ENCODE measurements at regions of chr3 and their contacts with region 1.

Region 1: DNA sequence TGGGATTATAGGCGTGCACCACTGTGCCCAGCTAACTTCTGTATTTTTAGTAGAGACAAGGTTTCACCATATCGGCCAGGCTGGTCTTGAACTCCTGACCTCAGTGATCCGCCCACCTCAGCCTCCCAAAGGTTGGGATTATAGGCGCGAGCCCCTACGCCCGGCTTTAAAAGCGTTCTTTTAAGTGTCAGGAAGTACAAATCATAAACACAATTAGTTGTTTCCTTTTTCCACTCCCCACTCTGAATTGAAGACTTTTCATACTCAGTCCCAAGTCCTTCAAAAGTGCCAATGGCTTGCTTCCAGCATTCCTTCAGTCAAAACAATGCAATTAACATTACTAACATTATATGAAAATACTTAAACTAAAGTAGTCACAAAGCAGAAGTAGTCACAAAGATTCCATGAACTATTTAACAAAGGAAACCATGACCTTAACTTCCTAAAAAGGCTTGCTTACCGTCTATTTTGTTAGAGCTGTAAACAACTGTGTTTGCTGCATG is 8.1 kb downstream of the WDR82 start:
- DNase-seq: no peak
- H3K4me3 Mint-ChIP-seq: peak overlapping the region; percentile 72
- H3K27ac Mint-ChIP-seq: peak overlapping the region; percentile 91
- H3K4me1 Mint-ChIP-seq: peaks cover 87% of the 10 kb centered on the region
- H3K27me3 Mint-ChIP-seq: no peaks in the 10 kb centered on the region

Region 2: DNA sequence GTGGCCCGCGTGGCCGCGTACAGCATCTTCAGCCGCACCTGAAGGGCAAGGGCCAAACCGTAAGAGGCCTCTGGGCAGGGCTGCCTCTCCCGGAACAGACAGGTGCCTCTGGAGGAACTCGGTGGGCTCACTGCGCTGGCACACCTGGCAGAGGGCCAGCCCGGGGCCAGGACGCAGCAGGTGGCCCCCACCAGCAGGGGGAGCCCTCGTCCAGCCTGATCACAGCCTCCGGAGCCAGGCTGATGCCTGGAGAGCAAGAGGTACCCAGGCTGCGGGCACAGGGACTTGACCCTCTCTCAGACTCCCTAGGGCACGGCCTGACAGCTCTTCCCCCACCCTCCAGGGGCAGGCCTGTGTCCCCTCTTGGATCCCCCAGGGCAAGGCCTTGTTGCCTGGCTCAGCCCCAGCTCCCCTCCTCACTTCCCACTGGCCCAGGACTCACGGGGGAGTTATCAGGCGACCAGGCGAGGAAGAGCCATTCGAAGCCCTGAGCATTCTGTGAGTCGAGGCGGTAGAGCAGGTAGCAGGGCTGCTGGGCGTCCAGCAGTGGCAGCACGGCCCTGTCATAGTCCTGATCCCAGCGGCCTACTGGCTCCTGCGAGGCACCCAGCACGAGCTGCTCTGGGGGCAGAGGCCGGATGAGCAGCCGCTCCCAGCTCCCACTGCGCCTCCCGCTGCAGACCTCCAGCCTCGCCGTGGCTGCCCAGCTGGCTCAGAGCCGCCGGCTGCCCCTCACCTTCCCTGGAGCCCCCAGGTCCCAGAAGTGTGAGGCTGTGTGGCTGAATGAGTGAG is 38.6 kb before region 1 on chr3:
- CTCF ChIA-PET with region 1: interaction called, 13 read pairs
- POLR2A ChIA-PET with region 1: interaction called, 1,001 read pairs
- DNase-seq: peak; percentile 87
- H3K4me3 Mint-ChIP-seq: no peak overlapping the region
- H3K27ac Mint-ChIP-seq: peak overlapping the region; percentile 63
- H3K4me1 Mint-ChIP-seq: peaks cover 45% of the 10 kb centered on the region
- H3K27me3 Mint-ChIP-seq: no peaks in the 10 kb centered on the region

Region 3: GRCh38 chr3:52238761-52239701 is 31.3 kb before region 1 on chr3 and contains the start of gene TWF2:
- CTCF ChIA-PET with region 1: interaction called, 16 read pairs
- POLR2A ChIA-PET with region 1: interaction called, 1,001 read pairs
- DNase-seq: peak; percentile 87
- H3K4me3 Mint-ChIP-seq: peak within 1 kb of the TSS; percentile 95
- H3K27ac Mint-ChIP-seq: peak within 1 kb of the TSS; percentile 97
- H3K4me1 Mint-ChIP-seq: peaks cover 77% of the 10 kb centered on the region
- H3K27me3 Mint-ChIP-seq: no peaks in the 10 kb centered on the region
- total RNA-seq, gene TWF2: 118 to 119 TPM

Region 4: GRCh38 chr3:52253314-52254304 is 16.7 kb before region 1 on chr3:
- CTCF ChIA-PET with region 1: interaction called, 53 read pairs
- POLR2A ChIA-PET with region 1: interaction called, 1,001 read pairs
- DNase-seq: peak; percentile 87
- H3K4me3 Mint-ChIP-seq: peak overlapping the region; percentile 72
- H3K27ac Mint-ChIP-seq: peak overlapping the region; percentile 99
- H3K4me1 Mint-ChIP-seq: peaks cover 85% of the 10 kb centered on the region
- H3K27me3 Mint-ChIP-seq: no peaks in the 10 kb centered on the region

Region 5: GRCh38 chr3:52259035-52259434 is 11.3 kb before region 1 on chr3:
- CTCF ChIA-PET with region 1: interaction called, 53 read pairs
- POLR2A ChIA-PET with region 1: interaction called, 1,001 read pairs
- DNase-seq: no peak
- H3K4me3 Mint-ChIP-seq: no peak overlapping the region
- H3K27ac Mint-ChIP-seq: peak overlapping the region; percentile 62
- H3K4me1 Mint-ChIP-seq: peaks cover 95% of the 10 kb centered on the region
- H3K27me3 Mint-ChIP-seq: no peaks in the 10 kb centered on the region